Activated CD4-positive, alpha-beta memory T cell treated with anti-CD3 and anti-CD28 coated beads for 36 hours (primary cell): ENCODE measurements at regions of chr9 and their contacts with region 1.

Region 1: GRCh38 chr9:82021198-82021597 is 32.6 kb downstream of the SPATA31D1 start:
- DNase-seq: no peak
- H3K4me3 Mint-ChIP-seq: no peak overlapping the region
- H3K27ac Mint-ChIP-seq: no peak overlapping the region
- H3K4me1 Mint-ChIP-seq: no peaks in the 10 kb centered on the region
- H3K27me3 Mint-ChIP-seq: no peaks in the 10 kb centered on the region

Region 2: DNA sequence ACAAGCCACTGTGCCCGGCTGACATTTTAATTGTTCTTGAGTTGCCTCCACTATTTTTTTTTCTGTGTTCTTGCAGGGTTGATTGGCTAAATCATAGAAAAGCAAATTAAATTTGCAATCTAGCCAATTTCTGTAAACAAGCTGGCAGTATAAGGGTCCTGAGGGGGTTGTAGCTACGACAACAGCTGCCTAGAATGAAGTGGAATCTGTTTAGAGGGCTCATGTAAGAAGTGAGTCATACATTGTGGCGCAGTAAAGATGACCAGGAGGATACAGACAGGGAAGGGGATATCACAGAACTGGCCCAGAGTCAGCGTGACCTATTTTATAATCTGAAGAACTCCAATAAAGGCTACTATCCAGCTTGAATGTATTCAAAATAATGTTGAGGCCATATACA is 249.6 kb before region 1 on chr9:
- CTCF ChIA-PET with region 1: no interaction called
- POLR2A ChIA-PET with region 1: no interaction called
- intact Hi-C with region 1: no loop called
- DNase-seq: no peak
- H3K4me3 Mint-ChIP-seq: no peak overlapping the region
- H3K27ac Mint-ChIP-seq: no peak overlapping the region
- H3K4me1 Mint-ChIP-seq: no peaks in the 10 kb centered on the region
- H3K27me3 Mint-ChIP-seq: no peaks in the 10 kb centered on the region

Region 3: DNA sequence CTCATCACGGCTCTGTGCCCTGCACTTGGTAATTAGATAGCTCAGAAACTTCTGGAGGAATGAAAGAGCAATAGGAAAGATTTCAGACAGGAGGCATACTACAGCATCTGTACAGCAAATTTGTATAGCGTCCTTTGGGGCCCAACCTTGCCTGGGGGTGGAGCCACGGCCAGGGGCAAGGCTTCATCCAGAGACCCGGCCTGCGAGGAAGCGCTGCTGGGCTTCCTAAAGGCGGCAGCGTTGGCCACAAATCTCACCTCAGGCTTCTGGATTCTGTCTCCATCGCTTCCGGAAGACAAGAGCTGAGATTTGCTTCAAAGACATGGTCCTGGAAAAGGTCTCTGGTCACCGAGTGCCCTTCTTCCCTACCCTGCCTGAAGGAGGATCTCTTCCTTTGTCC is 44.8 kb before region 1 on chr9:
- CTCF ChIA-PET with region 1: no interaction called
- POLR2A ChIA-PET with region 1: no interaction called
- intact Hi-C with region 1: loop called (anchors 2 kb)
- DNase-seq: no peak
- H3K4me3 Mint-ChIP-seq: no peak overlapping the region
- H3K27ac Mint-ChIP-seq: no peak overlapping the region
- H3K4me1 Mint-ChIP-seq: no peaks in the 10 kb centered on the region
- H3K27me3 Mint-ChIP-seq: no peaks in the 10 kb centered on the region